ENCODE measurements at regions of chr1 and their contacts with region 1.

Region 1: DNA sequence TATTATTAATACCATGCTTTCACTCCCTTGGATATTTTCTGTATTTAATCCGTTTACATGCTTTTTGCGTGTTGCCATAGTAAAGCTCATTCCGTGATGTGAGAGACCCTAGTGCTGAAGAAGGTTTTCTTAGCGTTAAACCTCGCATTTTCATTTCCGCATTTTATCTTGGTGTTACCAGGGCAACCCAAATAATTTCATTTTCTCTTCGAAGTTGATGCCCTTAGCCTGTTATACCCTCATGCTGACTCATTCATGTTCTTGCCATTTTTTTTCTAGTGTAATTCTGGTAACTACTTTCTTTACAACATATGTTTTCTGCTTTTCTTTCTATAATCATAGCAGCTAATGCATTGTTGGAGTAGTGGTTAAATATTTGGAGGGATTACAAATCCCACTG is 37.2 kb downstream of the LRRC8C start:
- DNase-seq: no peak
- H3K4me3 Mint-ChIP-seq: peak overlapping the region; percentile 44
- H3K27ac Mint-ChIP-seq: peak overlapping the region; percentile 83
- H3K4me1 Mint-ChIP-seq: peaks cover 85% of the 10 kb centered on the region
- H3K27me3 Mint-ChIP-seq: no peaks in the 10 kb centered on the region

Region 2: DNA sequence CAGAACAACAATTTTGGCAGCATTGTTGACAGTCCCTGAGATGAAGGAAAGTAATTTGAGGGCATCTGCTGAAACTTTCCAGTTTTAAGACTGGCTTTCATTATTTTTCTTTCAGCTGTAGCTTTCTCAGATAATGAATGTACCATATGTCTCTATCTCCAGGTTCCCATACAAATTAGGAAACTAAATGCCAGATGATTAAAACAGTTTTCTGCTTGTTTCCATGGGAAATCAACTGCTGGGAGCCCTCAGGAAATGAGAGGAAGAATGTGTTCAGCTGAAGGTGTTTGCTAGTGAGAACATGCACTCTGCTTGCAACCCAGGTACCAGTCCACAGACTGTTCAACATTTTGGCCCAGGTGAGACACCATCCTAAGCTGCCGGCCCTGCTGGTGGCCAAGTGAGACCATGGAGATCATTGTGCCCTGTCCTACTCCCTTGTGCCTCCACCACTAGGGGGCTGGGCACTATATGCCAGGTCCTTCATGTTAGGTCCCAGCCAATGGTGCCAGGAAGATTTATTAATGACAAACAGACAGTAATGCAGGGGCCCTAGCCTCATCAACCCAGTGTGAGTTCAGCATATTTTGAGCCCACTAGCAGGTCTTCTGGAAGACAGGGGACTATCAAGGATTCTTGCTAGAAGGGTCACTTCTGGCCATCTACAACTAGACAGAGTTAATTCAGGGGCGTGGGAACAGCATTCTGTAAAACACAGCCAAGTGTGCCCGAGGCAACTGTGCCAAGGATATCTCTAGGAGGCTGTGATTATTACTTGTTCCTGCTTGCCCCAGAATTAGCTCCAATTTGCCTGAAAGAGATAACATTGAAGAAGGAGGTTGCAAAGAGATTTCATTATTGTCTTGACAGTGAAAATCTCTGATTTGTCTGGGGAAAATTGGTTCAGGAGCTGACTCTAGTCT is 54.2 kb before region 1 on chr1:
- intact Hi-C with region 1: no loop called
- DNase-seq: no peak
- H3K4me3 Mint-ChIP-seq: no peak overlapping the region
- H3K27ac Mint-ChIP-seq: peak overlapping the region; percentile 31
- H3K4me1 Mint-ChIP-seq: peaks cover 75% of the 10 kb centered on the region
- H3K27me3 Mint-ChIP-seq: no peaks in the 10 kb centered on the region

Region 3: DNA sequence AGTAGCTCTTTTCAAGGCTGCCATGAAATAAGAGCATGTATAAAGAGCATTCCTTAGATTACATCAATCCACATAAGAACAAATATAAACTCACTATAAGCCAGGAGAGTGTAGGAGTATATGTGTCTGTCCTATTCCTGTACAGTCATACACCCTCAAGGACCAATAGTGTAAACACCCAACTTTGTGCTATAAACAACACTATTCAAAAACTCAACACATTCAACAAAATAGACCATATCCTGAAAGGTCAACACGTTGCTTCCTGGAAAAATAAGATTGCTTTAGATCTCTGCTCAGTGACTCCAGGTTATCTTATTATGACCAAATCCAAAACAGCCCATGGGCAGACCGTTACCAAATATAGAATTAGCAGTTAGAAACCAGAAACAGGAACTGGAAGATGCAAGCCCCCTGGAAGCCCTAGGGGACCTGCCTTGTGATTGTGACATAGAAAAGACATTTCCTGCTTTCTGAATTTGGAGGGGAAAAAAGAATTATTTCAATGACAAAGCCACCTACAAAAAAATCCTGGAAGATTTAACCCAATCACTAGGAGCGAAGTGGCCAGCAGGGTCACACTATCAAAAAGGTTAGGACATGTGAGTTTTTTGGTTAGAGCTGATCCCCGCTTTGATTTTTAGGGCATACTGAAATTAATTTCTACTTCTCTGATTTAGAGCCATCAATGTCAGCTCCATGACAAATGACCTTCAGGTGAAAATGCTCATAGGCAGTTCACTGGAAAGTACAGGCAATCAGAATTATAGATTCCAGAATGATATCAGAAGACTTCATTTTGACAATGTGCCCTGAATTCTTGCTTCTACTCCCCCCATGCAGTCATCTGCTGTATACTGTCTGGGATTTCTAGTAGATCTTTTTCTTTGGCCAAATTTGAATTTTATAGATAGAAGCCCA is 22.7 kb after region 1 on chr1:
- intact Hi-C with region 1: loop called (anchors 2 kb)
- DNase-seq: no peak
- H3K4me3 Mint-ChIP-seq: no peak overlapping the region
- H3K27ac Mint-ChIP-seq: peak overlapping the region; percentile 83
- H3K4me1 Mint-ChIP-seq: peaks cover 81% of the 10 kb centered on the region
- H3K27me3 Mint-ChIP-seq: no peaks in the 10 kb centered on the region